Colonic mucosa (tissue), 4 donors: ENCODE measurements at regions of chr2 and their contacts with region 1.

Region 1: DNA sequence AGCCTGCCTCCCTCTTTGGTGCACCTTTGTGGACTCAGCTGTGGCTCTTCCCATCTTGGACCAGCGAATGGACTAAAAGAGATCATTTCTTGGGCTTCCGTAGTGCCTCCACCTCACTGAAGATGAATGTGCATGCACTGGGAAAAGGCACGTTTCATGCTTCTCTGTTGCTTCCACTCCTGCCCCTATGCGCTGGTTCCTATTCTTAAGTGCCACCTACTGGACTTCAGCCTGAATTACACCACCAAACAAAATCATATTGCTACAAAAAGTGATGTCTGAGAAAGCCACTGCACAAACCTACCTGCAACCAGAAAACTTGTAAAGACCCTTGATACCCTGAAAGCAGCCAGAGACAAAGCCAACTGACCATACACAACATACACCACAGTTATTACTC is 695.6 kb downstream of the TSN start:
- DNase-seq: no peak
- H3K4me3 ChIP-seq: no peak overlapping the region
- H3K27ac ChIP-seq: no peak overlapping the region
- H3K4me1 ChIP-seq: no peaks in the 10 kb centered on the region
- H3K27me3 ChIP-seq: no peaks in the 10 kb centered on the region
- CTCF ChIP-seq: peak; percentile 32

Region 2: DNA sequence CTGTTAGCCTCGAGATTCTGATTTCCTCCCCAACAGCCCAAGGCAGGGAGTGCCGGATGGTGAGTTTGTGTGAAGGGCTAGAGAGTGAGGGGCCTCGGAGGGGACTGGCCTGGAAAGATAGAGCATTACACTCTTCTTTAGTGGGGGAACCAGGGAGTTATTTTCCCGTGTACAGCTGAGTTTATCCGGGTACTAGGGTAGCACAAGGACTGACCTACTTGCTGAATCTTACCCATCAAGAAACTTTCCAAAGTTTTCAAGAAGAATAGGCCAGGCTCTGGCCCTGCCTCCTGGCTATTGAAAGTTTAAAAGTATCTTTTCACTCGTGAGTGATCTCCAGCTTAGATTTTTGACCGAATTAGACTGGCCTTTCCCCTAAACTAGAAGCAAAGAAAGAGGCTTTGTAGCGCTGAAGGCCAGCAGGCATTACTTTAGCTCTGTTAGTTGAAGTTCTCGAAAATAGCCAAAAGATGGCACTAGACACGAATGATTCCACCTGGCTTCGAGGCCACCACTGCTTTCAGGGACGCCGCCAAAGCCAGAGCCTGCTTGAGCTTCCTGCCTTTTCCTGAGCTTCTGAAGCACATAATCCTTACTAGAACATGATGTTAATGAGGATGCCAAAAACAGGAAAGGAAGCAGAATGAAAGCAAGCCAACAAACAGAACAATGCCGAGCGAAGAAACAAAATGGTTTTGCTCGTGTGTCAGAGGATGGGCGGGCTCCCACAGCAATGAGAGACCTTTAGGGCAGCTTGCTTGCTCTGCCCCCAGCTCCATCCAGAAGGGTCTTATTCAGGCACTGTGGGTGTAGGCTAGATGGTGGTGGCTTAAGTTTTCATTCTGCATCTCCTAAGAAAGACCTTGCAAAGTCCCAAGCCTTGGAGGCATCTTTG is 639.8 kb before region 1 on chr2:
- intact Hi-C with region 1: loop called (anchors 5 kb)
- DNase-seq: peak; percentile 30
- H3K4me3 ChIP-seq: no peak overlapping the region
- H3K27ac ChIP-seq: no peak overlapping the region
- H3K4me1 ChIP-seq: no peaks in the 10 kb centered on the region
- H3K27me3 ChIP-seq: no peaks in the 10 kb centered on the region
- CTCF ChIP-seq: peak; percentile 39

Region 3: DNA sequence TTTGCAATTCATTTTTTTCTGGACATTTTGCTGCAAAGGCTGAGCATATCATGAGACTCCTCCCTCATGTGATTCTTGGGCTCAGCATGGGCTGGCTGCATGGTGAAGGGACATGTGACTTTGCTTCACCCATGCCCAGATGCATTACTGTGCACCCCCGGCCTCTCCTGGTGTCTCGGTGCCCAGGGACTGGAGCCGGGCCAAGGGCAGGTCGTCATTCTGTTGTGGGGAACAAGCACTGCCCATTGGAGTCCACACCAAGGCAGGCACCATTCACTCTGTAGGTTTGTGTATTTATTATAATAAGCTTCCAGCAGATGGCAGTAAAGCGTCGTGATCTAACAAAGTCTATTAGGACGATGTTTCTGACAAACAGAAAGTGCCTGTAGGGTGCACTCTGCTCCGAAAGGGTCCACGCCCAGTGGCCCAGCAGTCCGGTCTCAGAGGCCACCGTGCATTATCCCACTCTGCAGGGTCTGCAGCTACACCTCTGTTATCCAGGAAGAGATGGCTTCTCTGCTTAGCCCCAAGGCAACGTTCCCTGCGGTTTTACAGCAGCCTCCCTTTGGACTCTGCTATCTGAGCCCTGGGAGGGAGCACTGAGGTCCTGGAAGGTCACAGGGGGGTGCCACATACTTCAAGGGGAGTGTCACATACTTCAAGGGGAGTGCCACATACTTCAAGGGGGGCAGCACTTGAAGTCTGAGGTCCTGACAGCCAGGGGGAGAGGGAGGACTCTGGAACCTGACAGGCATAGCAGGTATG is 476.0 kb before region 1 on chr2:
- intact Hi-C with region 1: loop called (anchors 5 kb)
- DNase-seq: peak; percentile 49
- H3K4me3 ChIP-seq: peak overlapping the region; percentile 23
- H3K27ac ChIP-seq: no peak overlapping the region
- H3K4me1 ChIP-seq: no peaks in the 10 kb centered on the region
- H3K27me3 ChIP-seq: no peaks in the 10 kb centered on the region
- CTCF ChIP-seq: peak; percentile 46